CD8-positive, alpha-beta T cell (primary cell): ENCODE measurements at regions of chr15 and their contacts with region 1.

Region 1: DNA sequence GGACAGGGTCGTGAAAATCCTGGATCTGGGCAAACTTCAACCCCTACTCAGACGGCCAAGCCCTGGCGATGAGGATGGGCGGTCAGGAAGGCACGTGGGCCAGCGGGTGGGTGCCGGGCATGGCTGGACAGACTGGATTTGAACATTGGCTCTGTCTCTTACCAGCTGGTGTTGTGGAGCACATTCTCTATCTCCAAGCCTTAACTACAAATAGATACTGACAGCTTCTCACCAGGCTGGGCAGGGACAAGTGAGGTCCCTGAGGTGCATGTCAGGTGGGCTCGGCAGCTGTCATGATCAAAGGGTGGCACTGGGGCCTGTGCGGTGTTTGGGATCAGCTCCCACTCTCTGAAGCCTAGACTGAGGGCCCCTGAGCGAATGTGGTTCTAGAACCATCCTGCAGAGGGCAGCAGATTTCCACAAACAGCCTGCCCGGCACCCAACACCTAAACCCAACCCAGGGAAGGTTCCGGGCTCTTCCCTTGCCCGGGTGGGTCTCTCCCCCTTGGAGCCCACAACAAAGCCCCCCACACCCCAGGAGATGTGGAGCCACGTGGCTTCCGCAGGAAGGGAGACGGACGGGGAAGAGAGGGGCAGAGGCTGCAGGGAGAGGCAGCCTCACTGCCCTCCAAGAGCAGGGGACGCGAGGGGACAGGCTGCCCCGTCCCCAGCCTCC is 58.4 kb downstream of the RGMA start:
- DNase-seq: peak; percentile 40 to 80 (median 67)
- ATAC-seq: peak; percentile 85
- H3K4me3 ChIP-seq: no peak overlapping the region
- H3K4me3 Mint-ChIP-seq: no peak overlapping the region
- H3K27ac ChIP-seq: no peak overlapping the region
- H3K27ac Mint-ChIP-seq: no peak overlapping the region
- H3K4me1 ChIP-seq: peaks cover 14% of the 10 kb centered on the region
- H3K4me1 Mint-ChIP-seq: peaks cover 26% of the 10 kb centered on the region
- H3K27me3 ChIP-seq: no peaks in the 10 kb centered on the region
- H3K27me3 Mint-ChIP-seq: no peaks in the 10 kb centered on the region
- CTCF ChIP-seq: peak; percentile 82

Region 2: DNA sequence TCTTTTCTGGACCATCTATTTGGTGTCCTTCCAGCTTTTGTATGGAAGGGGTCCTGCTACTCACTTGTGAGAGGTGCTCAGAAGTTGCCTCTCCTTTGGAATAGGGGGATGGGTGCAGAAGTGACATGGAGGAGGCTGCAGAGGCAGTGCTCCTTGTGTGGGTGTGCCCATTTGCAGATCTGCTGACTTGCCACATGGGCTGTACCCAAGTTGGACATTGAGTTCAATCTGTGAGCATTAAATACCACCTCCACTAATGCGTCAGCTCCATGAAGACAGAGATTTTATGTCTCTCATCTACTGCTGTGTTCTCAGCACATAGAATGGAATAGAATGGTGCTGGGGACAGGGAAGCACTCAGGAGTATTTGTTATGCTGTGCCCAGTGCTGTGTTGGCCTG is 17.8 kb before region 1 on chr15:
- CTCF ChIA-PET with region 1: interaction called, 31 read pairs
- POLR2A ChIA-PET with region 1: interaction called, 4 read pairs
- intact Hi-C with region 1: no loop called
- DNase-seq: no peak
- ATAC-seq: no peak
- H3K4me3 ChIP-seq: no peak overlapping the region
- H3K4me3 Mint-ChIP-seq: no peak overlapping the region
- H3K27ac ChIP-seq: no peak overlapping the region
- H3K27ac Mint-ChIP-seq: no peak overlapping the region
- H3K4me1 ChIP-seq: no peaks in the 10 kb centered on the region
- H3K4me1 Mint-ChIP-seq: peaks cover 5% of the 10 kb centered on the region
- H3K27me3 ChIP-seq: no peaks in the 10 kb centered on the region
- H3K27me3 Mint-ChIP-seq: no peaks in the 10 kb centered on the region
- CTCF ChIP-seq: no peak

Region 3: GRCh38 chr15:93018580-93018979 is 12.0 kb before region 1 on chr15:
- CTCF ChIA-PET with region 1: interaction called, 31 read pairs
- POLR2A ChIA-PET with region 1: interaction called, 4 read pairs
- intact Hi-C with region 1: no loop called
- DNase-seq: no peak
- ATAC-seq: no peak
- H3K4me3 ChIP-seq: no peak overlapping the region
- H3K4me3 Mint-ChIP-seq: no peak overlapping the region
- H3K27ac ChIP-seq: no peak overlapping the region
- H3K27ac Mint-ChIP-seq: peak overlapping the region; percentile 58
- H3K4me1 ChIP-seq: peaks cover 5% of the 10 kb centered on the region
- H3K4me1 Mint-ChIP-seq: peaks cover 49% of the 10 kb centered on the region
- H3K27me3 ChIP-seq: no peaks in the 10 kb centered on the region
- H3K27me3 Mint-ChIP-seq: no peaks in the 10 kb centered on the region
- CTCF ChIP-seq: no peak

Region 4: GRCh38 chr15:93048759-93049161 is 18.2 kb after region 1 on chr15:
- CTCF ChIA-PET with region 1: interaction called, 59 read pairs
- POLR2A ChIA-PET with region 1: interaction called, 7 read pairs
- intact Hi-C with region 1: loop called in 1 of 2 experiments (anchors 1 kb)
- DNase-seq: peak in 3 of 9 experiments; percentile 43 to 49 (median 45)
- ATAC-seq: no peak
- H3K4me3 ChIP-seq: no peak overlapping the region
- H3K4me3 Mint-ChIP-seq: peak overlapping the region; percentile 8
- H3K27ac ChIP-seq: no peak overlapping the region
- H3K27ac Mint-ChIP-seq: no peak overlapping the region
- H3K4me1 ChIP-seq: peaks cover 35% of the 10 kb centered on the region
- H3K4me1 Mint-ChIP-seq: peaks cover 40% of the 10 kb centered on the region
- H3K27me3 ChIP-seq: no peaks in the 10 kb centered on the region
- H3K27me3 Mint-ChIP-seq: no peaks in the 10 kb centered on the region
- CTCF ChIP-seq: no peak

Region 5: DNA sequence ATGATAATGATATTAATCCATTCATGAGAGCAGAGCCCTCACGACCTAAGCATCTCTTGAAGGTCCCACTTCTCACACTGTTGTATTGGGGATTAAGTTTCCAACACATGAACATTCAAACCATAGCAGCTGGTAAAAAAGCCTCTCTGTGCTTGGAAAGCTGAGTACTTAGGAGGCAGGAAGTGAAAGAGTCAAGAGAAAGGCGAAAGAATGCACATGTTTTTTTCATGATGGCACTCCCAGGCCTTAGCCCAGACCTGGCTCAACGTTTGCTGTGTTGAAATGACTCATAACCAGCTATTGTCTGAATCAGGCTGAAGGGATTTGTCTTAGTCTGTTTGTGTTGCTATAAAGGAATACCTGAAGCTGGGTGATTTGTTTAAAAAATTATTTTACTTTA is 142.8 kb after region 1 on chr15:
- CTCF ChIA-PET with region 1: no interaction called
- POLR2A ChIA-PET with region 1: no interaction called
- intact Hi-C with region 1: no loop called
- DNase-seq: no peak
- ATAC-seq: no peak
- H3K4me3 ChIP-seq: no peak overlapping the region
- H3K4me3 Mint-ChIP-seq: no peak overlapping the region
- H3K27ac ChIP-seq: no peak overlapping the region
- H3K27ac Mint-ChIP-seq: no peak overlapping the region
- H3K4me1 ChIP-seq: no peaks in the 10 kb centered on the region
- H3K4me1 Mint-ChIP-seq: no peaks in the 10 kb centered on the region
- H3K27me3 ChIP-seq: peaks cover 0 to 3% of the 10 kb centered on the region in 2 experiments
- H3K27me3 Mint-ChIP-seq: peaks cover 48% of the 10 kb centered on the region
- CTCF ChIP-seq: no peak

Region 6: GRCh38 chr15:94119923-94120775 is 1089.6 kb after region 1 on chr15:
- CTCF ChIA-PET with region 1: interaction called, 32 read pairs
- POLR2A ChIA-PET with region 1: no interaction called
- intact Hi-C with region 1: loop called (anchors 1 kb)
- DNase-seq: peak; percentile 2 to 80 (median 24)
- ATAC-seq: peak; percentile 94
- H3K4me3 ChIP-seq: no peak overlapping the region
- H3K4me3 Mint-ChIP-seq: no peak overlapping the region
- H3K27ac ChIP-seq: no peak overlapping the region
- H3K27ac Mint-ChIP-seq: no peak overlapping the region
- H3K4me1 ChIP-seq: no peaks in the 10 kb centered on the region
- H3K4me1 Mint-ChIP-seq: no peaks in the 10 kb centered on the region
- H3K27me3 ChIP-seq: no peaks in the 10 kb centered on the region
- H3K27me3 Mint-ChIP-seq: no peaks in the 10 kb centered on the region
- CTCF ChIP-seq: peak; percentile 66